ENCODE measurements at regions of chr3 and their contacts with region 1.

Region 1: GRCh38 chr3:179658606-179659005 is 5.8 kb downstream of the USP13 start:
- DNase-seq: no peak
- H3K4me3 ChIP-seq: no peak overlapping the region
- H3K27ac ChIP-seq: no peak overlapping the region
- H3K4me1 ChIP-seq: peaks cover 6% of the 10 kb centered on the region
- H3K27me3 ChIP-seq: no peaks in the 10 kb centered on the region
- CTCF ChIP-seq: no peak
- EP300 ChIP-seq: no peak
- POLR2A ChIP-seq: no peak

Region 2: GRCh38 chr3:179604321-179605078 is 54.1 kb before region 1 on chr3 and contains the starts of genes MRPL47 and NDUFB5:
- intact Hi-C with region 1: loop called in 1 of 4 experiments (anchors 5 kb)
- DNase-seq: peak; percentile 92 to 95 (median 93)
- H3K4me3 ChIP-seq: peak within 1 kb of the TSS; percentile 70
- H3K27ac ChIP-seq: peak within 1 kb of the TSS; percentile 64 to 71
- H3K4me1 ChIP-seq: no peaks in the 10 kb centered on the region
- H3K27me3 ChIP-seq: no peaks in the 10 kb centered on the region
- CTCF ChIP-seq: no peak
- EP300 ChIP-seq: no peak
- POLR2A ChIP-seq: peak; percentile 75
- total RNA-seq, gene MRPL47: 13.1 to 27.4 (median 21.8) TPM
- total RNA-seq, gene NDUFB5: 66.6 to 102 (median 71.8) TPM

Region 3: GRCh38 chr3:179726075-179726699 is 67.6 kb after region 1 on chr3:
- intact Hi-C with region 1: no loop called
- DNase-seq: no peak
- H3K4me3 ChIP-seq: no peak overlapping the region
- H3K27ac ChIP-seq: no peak overlapping the region
- H3K4me1 ChIP-seq: no peaks in the 10 kb centered on the region
- H3K27me3 ChIP-seq: no peaks in the 10 kb centered on the region
- CTCF ChIP-seq: no peak
- EP300 ChIP-seq: no peak
- POLR2A ChIP-seq: no peak

Region 4: DNA sequence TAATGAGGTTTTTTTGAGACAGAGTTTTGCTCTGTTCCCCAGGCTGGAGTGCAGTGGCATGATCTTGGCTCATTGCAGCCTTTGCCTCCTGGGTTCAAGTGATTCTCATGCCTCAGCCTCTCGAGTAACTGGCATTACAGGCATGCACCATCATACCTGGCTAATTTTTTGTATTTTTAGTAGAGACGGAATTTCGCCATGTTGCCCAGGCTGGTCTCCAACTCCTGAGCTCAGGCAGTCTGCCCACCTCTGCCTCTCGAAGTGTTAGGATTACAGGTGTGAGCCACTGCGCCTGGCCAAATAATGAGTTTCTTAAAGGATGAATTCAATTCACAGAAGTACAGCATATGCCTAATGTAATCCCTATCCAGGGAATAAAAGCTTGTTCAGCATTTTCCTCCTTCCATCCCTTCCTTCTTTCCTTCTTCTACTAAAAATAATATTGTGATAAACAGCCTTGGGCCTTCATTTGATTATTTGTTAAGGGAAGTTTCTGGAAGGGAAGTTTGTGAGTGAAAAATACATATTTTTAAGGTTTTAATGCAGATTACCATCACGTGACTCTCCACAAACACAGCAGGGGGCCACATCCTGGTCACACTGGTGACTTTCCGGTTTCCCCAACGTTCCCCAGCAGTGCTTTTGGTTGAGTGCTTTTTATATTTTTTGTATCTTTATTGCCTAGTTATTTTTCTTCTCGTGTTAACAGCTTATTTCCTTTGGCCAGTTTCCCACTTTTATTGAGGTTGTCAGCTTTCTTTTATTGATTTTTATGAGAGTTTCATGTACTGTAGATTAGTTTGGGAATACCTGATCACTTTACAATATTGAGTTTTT is 111.0 kb after region 1 on chr3:
- intact Hi-C with region 1: no loop called
- DNase-seq: no peak
- H3K4me3 ChIP-seq: no peak overlapping the region
- H3K27ac ChIP-seq: no peak overlapping the region
- H3K4me1 ChIP-seq: no peaks in the 10 kb centered on the region
- H3K27me3 ChIP-seq: no peaks in the 10 kb centered on the region
- CTCF ChIP-seq: no peak
- EP300 ChIP-seq: no peak
- POLR2A ChIP-seq: no peak

Measured in ovary (tissue), 10 donors.